ENCODE measurements at regions of chr6 and their contacts with region 1.

Region 1: GRCh38 chr6:89970609-89971337 is 76.5 kb downstream of the GJA10 start:
- DNase-seq: no peak
- ATAC-seq: peak; percentile 67 to 85 (median 70)
- H3K4me3 ChIP-seq: no peak overlapping the region
- H3K27ac ChIP-seq: no peak overlapping the region
- H3K4me1 ChIP-seq: no peaks in the 10 kb centered on the region
- H3K27me3 ChIP-seq: no peaks in the 10 kb centered on the region
- CTCF ChIP-seq: peak; percentile 37 to 50 (median 48)
- POLR2A ChIP-seq: no peak

Region 2: GRCh38 chr6:89415185-89415584 is 555.6 kb before region 1 on chr6:
- intact Hi-C with region 1: no loop called
- DNase-seq: no peak
- ATAC-seq: no peak
- H3K4me3 ChIP-seq: no peak overlapping the region
- H3K27ac ChIP-seq: no peak overlapping the region
- H3K4me1 ChIP-seq: peaks cover 0 to 8% (median 0%) of the 10 kb centered on the region in 4 donors
- H3K27me3 ChIP-seq: no peaks in the 10 kb centered on the region
- CTCF ChIP-seq: no peak
- POLR2A ChIP-seq: no peak

Region 3: GRCh38 chr6:90098001-90098531 is 127.3 kb after region 1 on chr6:
- intact Hi-C with region 1: no loop called
- DNase-seq: no peak
- ATAC-seq: peak; percentile 36 to 85 (median 51)
- H3K4me3 ChIP-seq: no peak overlapping the region
- H3K27ac ChIP-seq: no peak overlapping the region
- H3K4me1 ChIP-seq: peaks cover 0 to 4% (median 0%) of the 10 kb centered on the region in 4 donors
- H3K27me3 ChIP-seq: no peaks in the 10 kb centered on the region
- CTCF ChIP-seq: peak in 3 of 4 donors; percentile 18 to 34 (median 24)
- POLR2A ChIP-seq: no peak

Region 4: DNA sequence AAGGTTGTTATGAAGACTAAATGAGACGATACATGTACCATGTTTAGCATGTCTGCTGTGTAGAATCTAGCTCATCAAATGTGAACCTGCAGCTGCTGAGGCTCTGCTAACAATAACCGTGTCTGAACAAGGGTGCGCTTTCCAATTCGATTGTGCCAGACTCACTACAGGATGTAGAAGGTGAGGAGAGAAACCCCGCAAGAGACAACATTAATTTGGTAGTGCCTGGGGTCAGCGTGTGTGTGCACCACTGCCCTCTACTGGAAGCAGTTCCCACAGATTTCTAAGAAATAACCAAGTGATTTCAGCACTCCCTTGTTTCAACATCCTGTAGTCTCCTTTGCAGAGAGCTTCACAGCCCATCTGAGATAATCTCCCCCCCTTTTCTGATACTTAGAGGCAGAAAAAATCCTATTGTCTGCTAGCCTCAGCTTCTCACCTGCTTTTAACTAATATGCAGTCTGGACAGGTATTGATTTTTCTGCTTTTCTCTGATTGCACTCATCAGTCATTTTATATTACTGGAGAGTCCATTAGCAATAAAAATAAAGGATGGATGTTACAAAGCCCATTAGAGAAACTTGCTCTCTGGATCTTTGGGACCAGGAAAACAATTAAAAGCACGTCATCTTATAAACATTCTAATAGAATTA is 422.6 kb after region 1 on chr6:
- intact Hi-C with region 1: loop called in 1 of 2 experiments (anchors 10 kb)
- DNase-seq: no peak
- ATAC-seq: peak; percentile 91 to 97 (median 94)
- H3K4me3 ChIP-seq: no peak overlapping the region
- H3K27ac ChIP-seq: no peak overlapping the region
- H3K4me1 ChIP-seq: no peaks in the 10 kb centered on the region
- H3K27me3 ChIP-seq: no peaks in the 10 kb centered on the region
- CTCF ChIP-seq: peak; percentile 75 to 82 (median 78)
- POLR2A ChIP-seq: no peak